A673 (cell line): ENCODE measurements at regions of chr3 and their contacts with region 1.

Region 1: GRCh38 chr3:151660885-151661284 is 72.8 kb upstream of the AADACL2 start:
- DNase-seq: peak; percentile 67
- H3K4me3 ChIP-seq: no peak overlapping the region
- H3K27ac ChIP-seq: peak overlapping the region; percentile 10
- H3K4me1 ChIP-seq: peaks cover 82% of the 10 kb centered on the region
- H3K27me3 ChIP-seq: no peaks in the 10 kb centered on the region
- CTCF ChIP-seq: peak; percentile 50; the same call in 1 of the 2 replicates

Region 2: DNA sequence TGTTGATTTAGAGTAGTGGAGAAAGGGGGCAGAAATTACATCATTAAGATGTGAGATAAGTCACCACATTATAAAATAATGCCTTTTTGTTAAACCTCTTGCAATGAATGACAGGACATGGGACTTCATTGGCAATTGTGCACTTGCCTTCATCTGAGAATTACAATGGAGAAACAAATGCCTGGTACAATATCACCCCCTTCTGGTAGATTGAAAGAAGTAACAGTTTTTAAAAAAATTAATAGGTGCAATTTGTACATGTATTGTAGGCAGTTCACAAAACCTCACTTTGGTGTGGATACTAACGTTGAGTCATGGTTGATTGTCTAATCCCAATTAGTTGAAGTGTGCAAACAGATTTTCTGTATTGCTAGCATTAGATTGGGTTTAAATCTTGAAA is 378.0 kb before region 1 on chr3:
- CTCF ChIA-PET with region 1: no interaction called
- POLR2A ChIA-PET with region 1: no interaction called
- intact Hi-C with region 1: loop called (anchors 10 kb)
- DNase-seq: peak; percentile 73
- H3K4me3 ChIP-seq: no peak overlapping the region
- H3K27ac ChIP-seq: no peak overlapping the region
- H3K4me1 ChIP-seq: no peaks in the 10 kb centered on the region
- H3K27me3 ChIP-seq: no peaks in the 10 kb centered on the region
- CTCF ChIP-seq: peak; percentile 67

Region 3: DNA sequence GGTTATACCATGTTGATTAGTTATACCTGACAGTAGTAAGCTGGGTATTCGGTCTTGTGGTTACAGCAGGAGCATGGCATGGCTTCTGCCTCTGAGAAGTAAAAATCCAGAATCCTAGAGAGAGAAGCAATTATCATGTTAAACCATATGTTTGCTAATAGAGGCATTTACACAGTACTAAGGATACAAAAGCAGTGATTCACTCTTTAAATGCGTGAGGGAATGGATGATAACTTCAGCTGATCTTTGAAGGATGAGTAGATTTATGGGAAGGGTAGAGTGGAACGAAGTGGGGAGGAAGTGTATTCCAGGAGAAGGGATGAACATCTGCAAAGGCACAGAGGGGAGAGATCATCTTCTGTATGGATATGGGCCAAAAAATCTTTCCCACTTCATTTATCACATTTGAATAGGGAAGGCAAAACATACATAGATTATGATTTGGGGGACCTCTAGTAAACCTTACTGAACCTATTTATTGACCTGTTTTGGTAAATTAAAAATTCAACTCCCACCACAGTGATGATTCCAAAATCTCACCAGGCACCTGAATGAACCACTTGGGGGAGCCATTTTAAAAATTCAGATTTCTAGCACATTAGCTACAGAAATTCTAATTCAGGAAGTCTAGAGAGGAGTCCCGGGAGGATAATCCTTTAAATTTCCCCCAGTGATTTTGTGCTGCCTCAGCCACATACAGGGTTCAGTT is 235.1 kb before region 1 on chr3:
- CTCF ChIA-PET with region 1: interaction called, 8 read pairs
- POLR2A ChIA-PET with region 1: no interaction called
- intact Hi-C with region 1: loop called (anchors 1 kb)
- DNase-seq: peak; percentile 90
- H3K4me3 ChIP-seq: no peak overlapping the region
- H3K27ac ChIP-seq: peak overlapping the region; percentile 35
- H3K4me1 ChIP-seq: peaks cover 20% of the 10 kb centered on the region
- H3K27me3 ChIP-seq: no peaks in the 10 kb centered on the region
- CTCF ChIP-seq: peak; percentile 80

Region 4: GRCh38 chr3:151439652-151440129 is 221.2 kb before region 1 on chr3:
- CTCF ChIA-PET with region 1: no interaction called
- POLR2A ChIA-PET with region 1: no interaction called
- intact Hi-C with region 1: loop called (anchors 2 kb)
- DNase-seq: peak; percentile 90
- H3K4me3 ChIP-seq: no peak overlapping the region
- H3K27ac ChIP-seq: peak overlapping the region; percentile 34
- H3K4me1 ChIP-seq: peaks cover 22% of the 10 kb centered on the region
- H3K27me3 ChIP-seq: no peaks in the 10 kb centered on the region
- CTCF ChIP-seq: peak; percentile 77

Region 5: GRCh38 chr3:151468284-151468917 is 192.5 kb before region 1 on chr3:
- CTCF ChIA-PET with region 1: no interaction called
- POLR2A ChIA-PET with region 1: no interaction called
- intact Hi-C with region 1: loop called (anchors 5 kb)
- DNase-seq: peak; percentile 81
- H3K4me3 ChIP-seq: no peak overlapping the region
- H3K27ac ChIP-seq: no peak overlapping the region
- H3K4me1 ChIP-seq: no peaks in the 10 kb centered on the region
- H3K27me3 ChIP-seq: no peaks in the 10 kb centered on the region
- CTCF ChIP-seq: peak; percentile 88

Region 6: DNA sequence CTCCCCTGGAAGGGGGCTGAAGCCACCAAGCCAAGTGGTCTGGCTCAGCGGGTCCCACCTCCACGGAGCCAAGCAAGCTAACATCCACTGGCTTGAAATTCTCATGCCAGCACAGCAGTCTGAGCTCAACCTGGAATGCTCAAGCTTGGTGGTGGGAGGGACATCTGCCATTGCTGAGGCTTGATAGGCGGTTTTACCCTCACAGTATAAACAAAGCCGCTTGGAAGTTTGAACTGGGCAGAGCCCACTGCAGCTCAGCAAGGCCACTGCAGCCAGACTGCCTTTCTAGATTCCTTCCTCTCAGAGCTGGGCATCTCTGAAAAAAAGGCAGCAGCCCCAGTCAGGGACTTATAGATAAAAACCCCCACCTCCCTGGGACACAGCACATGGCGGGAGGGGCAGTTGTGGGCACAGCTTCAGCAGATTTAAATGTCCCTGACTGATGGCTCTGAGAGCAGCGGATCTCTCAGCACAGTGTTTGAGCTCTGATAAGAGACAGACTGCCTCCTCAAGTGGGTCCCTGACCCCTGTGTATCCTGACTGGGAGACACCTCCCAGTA is 176.8 kb before region 1 on chr3:
- CTCF ChIA-PET with region 1: no interaction called
- POLR2A ChIA-PET with region 1: no interaction called
- intact Hi-C with region 1: no loop called
- DNase-seq: no peak
- H3K4me3 ChIP-seq: no peak overlapping the region
- H3K27ac ChIP-seq: no peak overlapping the region
- H3K4me1 ChIP-seq: no peaks in the 10 kb centered on the region
- H3K27me3 ChIP-seq: no peaks in the 10 kb centered on the region
- CTCF ChIP-seq: no peak

Region 7: DNA sequence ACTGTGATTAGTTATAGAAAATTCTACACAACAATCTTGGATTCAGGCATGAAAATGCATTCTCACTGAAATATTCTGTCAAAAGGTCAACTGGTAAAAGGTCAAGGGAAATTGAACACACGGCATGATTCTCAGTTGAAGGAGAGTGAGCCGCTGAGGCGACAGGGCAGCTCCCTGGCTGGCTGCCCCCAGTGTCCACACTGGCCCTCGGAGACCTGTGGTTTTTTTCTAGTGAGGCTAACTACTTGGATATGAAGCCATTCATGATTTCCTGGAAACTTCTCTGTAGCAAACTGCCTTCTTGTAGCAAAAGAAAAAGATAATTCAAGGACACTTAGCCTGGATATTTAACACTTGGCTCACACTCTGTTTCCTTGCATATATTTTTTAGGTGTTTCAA is 110.1 kb after region 1 on chr3:
- CTCF ChIA-PET with region 1: no interaction called
- POLR2A ChIA-PET with region 1: no interaction called
- intact Hi-C with region 1: loop called (anchors 5 kb)
- DNase-seq: no peak
- H3K4me3 ChIP-seq: no peak overlapping the region
- H3K27ac ChIP-seq: peak overlapping the region; percentile 83
- H3K4me1 ChIP-seq: peaks cover 62% of the 10 kb centered on the region
- H3K27me3 ChIP-seq: no peaks in the 10 kb centered on the region
- CTCF ChIP-seq: no peak